ENCODE measurements at regions of chr9 and their contacts with region 1.

Region 1: DNA sequence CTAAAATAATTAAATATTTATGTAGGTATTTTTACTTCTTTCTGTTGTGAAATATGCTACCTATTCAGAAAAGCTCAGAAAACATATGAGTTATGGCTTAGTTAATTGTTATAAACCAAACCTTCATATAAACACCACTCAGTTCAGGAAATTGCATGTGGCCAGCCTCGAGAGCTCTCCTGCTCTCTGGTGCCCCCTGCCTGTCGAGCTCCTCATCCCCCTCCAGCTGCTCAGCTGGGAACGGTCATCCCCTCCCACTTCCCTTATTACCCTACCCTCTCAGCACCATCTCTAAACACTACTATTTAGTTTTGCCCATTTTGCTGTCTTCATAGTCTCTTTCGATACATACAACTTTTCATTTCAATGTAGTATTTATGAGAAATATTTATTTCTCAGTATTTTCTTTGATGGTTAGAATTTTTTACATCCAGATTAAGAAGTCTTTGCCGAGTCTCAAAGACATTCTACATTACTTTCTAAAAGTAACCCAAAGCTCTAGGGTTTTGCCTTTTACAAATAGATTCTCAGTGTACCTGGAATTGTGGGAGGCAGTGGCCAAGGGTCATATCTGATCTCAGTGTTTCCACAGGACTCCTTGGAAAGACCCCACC is 51.2 kb upstream of the SEMA4D start:
- DNase-seq: peak; percentile 90
- ATAC-seq: peak; percentile 98
- H3K4me3 Mint-ChIP-seq: no peak overlapping the region
- H3K27ac Mint-ChIP-seq: peak overlapping the region; percentile 61
- H3K4me1 Mint-ChIP-seq: peaks cover 17% of the 10 kb centered on the region
- H3K27me3 Mint-ChIP-seq: no peaks in the 10 kb centered on the region
- CTCF ChIP-seq: peak; percentile 99

Region 2: GRCh38 chr9:89418882-89419640 is 130.1 kb before region 1 on chr9:
- CTCF ChIA-PET with region 1: interaction called, 84 read pairs
- POLR2A ChIA-PET with region 1: no interaction called
- intact Hi-C with region 1: loop called (anchors 5 kb)
- DNase-seq: peak; percentile 92
- ATAC-seq: peak; percentile 52
- H3K4me3 Mint-ChIP-seq: peak overlapping the region; percentile 79
- H3K27ac Mint-ChIP-seq: peak overlapping the region; percentile 98
- H3K4me1 Mint-ChIP-seq: peaks cover 97% of the 10 kb centered on the region
- H3K27me3 Mint-ChIP-seq: no peaks in the 10 kb centered on the region
- CTCF ChIP-seq: no peak

Region 3: GRCh38 chr9:89442981-89443814 is 105.9 kb before region 1 on chr9:
- CTCF ChIA-PET with region 1: interaction called, 22 read pairs
- POLR2A ChIA-PET with region 1: interaction called, 3 read pairs
- intact Hi-C with region 1: no loop called
- DNase-seq: no peak
- ATAC-seq: no peak
- H3K4me3 Mint-ChIP-seq: no peak overlapping the region
- H3K27ac Mint-ChIP-seq: peak overlapping the region; percentile 93
- H3K4me1 Mint-ChIP-seq: peaks cover 90% of the 10 kb centered on the region
- H3K27me3 Mint-ChIP-seq: no peaks in the 10 kb centered on the region
- CTCF ChIP-seq: no peak

Region 4: GRCh38 chr9:89466451-89467277 is 82.5 kb before region 1 on chr9:
- CTCF ChIA-PET with region 1: interaction called, 17 read pairs
- POLR2A ChIA-PET with region 1: interaction called, 11 read pairs
- intact Hi-C with region 1: no loop called
- DNase-seq: peak; percentile 84
- ATAC-seq: peak; percentile 70
- H3K4me3 Mint-ChIP-seq: peak overlapping the region; percentile 68
- H3K27ac Mint-ChIP-seq: peak overlapping the region; percentile 95
- H3K4me1 Mint-ChIP-seq: peaks cover 92% of the 10 kb centered on the region
- H3K27me3 Mint-ChIP-seq: no peaks in the 10 kb centered on the region
- CTCF ChIP-seq: no peak

Region 5: DNA sequence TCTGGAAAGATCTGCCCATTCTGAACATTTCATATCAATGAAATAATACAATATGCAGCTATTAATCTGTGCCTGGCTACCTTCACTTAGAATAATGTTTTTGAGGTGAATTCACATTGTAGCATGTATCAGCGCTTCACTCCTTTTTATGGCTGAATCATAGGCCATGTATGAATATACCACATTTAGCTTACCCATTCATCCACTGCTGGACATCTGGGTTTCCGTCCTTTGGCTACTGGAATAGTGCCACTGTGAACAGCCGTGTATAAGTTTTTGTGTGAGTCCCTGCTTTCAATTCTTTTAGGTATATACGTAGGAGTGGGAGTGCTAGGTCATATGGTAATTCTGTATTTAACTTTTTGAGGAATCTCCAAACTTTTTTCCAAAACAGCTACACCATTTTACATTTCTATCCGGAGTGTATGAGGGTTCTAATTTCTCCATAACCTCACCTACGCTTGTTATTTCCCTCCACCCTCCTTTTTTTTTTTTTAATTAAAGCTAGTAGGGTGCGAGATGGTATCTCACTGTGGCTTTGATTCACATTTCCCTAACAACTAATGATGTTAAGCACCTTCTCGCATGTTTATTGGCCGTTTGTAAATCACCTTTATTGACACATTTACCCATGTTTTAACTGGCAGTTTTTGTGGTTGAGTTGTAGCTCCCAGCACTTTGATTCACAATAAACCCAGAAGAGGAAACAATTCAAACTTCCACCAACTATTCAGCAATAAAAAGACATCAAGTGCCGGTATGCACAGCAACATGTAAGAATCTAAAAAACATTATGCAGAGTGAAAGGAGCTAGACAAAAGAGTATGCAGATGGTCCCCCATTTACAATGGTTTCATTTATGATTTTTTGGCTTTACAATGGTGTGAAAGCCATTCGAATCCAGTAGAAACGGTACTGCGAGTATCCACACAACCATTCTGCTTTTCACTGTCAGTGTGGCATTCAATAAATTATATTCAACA is 59.3 kb before region 1 on chr9:
- CTCF ChIA-PET with region 1: interaction called, 32 read pairs
- POLR2A ChIA-PET with region 1: interaction called, 10 read pairs
- intact Hi-C with region 1: no loop called
- DNase-seq: no peak
- ATAC-seq: peak; percentile 66
- H3K4me3 Mint-ChIP-seq: peak overlapping the region; percentile 61
- H3K27ac Mint-ChIP-seq: peak overlapping the region; percentile 89
- H3K4me1 Mint-ChIP-seq: peaks cover 95% of the 10 kb centered on the region
- H3K27me3 Mint-ChIP-seq: no peaks in the 10 kb centered on the region
- CTCF ChIP-seq: no peak

Region 6: GRCh38 chr9:89536145-89536574 is 13.0 kb before region 1 on chr9:
- CTCF ChIA-PET with region 1: interaction called, 95 read pairs
- POLR2A ChIA-PET with region 1: interaction called, 9 read pairs
- intact Hi-C with region 1: no loop called
- DNase-seq: peak; percentile 47
- ATAC-seq: peak; percentile 73
- H3K4me3 Mint-ChIP-seq: peak overlapping the region; percentile 47
- H3K27ac Mint-ChIP-seq: peak overlapping the region; percentile 96
- H3K4me1 Mint-ChIP-seq: peaks cover 88% of the 10 kb centered on the region
- H3K27me3 Mint-ChIP-seq: no peaks in the 10 kb centered on the region
- CTCF ChIP-seq: no peak

Measured in activated CD8-positive, alpha-beta T cell treated with anti-CD3 and anti-CD28 coated beads for 36 hours (primary cell).